ENCODE measurements at regions of chr2 and their contacts with region 1.

Region 1: DNA sequence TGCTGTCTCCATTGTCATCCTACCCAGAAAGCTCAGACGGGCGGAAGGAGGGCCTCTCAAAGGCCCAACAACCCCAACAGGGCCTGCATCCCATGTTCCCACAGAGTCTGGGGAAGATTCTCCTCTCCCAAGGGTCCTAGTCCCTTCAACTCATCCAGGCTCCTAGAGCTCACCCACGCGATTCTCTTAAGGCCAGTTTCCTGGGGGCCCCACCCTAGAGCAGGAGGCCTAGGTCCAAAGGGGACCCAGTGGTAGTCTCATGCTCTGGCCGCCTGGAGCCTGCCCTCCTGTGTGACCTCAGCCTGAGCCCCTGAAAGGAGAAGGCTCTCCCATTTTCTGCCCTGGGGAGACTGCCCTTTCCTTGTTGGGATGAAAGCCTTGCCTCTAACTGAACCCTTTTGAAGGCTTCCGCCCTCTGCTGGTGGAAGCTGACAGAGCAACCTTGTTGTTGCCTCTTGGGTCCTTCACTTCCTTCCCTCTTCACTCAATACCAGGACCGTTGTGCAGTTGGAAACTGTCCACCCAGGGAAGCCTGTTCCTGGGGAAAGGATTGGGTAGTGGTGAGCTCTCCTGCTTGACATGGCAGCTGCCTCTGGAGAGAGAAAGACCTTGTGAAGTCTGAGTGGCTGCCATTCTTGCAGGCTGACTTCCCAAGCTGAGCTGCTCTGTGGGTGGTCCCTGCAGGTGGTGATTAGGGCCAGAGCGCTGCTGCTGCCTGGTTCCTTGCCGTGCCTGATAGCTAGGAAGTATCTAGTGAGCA is 86.0 kb upstream of the ALPP start:
- DNase-seq: peak; percentile 23
- ATAC-seq: peak; percentile 50
- H3K4me3 Mint-ChIP-seq: no peak overlapping the region
- H3K27ac Mint-ChIP-seq: no peak overlapping the region
- H3K4me1 Mint-ChIP-seq: peaks cover 2% of the 10 kb centered on the region
- H3K27me3 Mint-ChIP-seq: no peaks in the 10 kb centered on the region
- CTCF ChIP-seq: no peak

Region 2: DNA sequence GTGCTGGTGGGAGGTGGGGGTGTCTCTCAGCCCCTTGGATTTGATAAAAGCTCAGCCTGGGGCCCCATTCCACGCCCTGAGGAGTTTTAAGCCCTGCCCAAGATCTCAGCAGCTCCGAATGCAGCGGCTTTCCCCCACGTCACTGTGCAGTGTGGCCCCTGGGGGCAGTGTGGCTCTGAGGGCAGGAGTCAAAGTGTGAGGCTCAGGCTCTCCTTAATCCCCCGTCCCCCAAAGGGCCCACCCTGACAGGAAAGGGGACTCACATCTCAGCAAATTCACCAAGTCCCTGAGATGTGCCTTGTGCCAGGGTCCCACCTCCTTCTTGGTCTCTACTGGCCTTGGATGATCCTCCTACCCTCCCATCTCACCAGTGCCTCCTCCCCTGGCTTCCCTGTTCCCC is 391.6 kb before region 1 on chr2:
- CTCF ChIA-PET with region 1: interaction called, 4 read pairs
- POLR2A ChIA-PET with region 1: no interaction called
- intact Hi-C with region 1: loop called (anchors 1 kb)
- DNase-seq: no peak
- ATAC-seq: no peak
- H3K4me3 Mint-ChIP-seq: no peak overlapping the region
- H3K27ac Mint-ChIP-seq: no peak overlapping the region
- H3K4me1 Mint-ChIP-seq: no peaks in the 10 kb centered on the region
- H3K27me3 Mint-ChIP-seq: no peaks in the 10 kb centered on the region
- CTCF ChIP-seq: no peak

Region 3: GRCh38 chr2:232308986-232309385 is 16.4 kb after region 1 on chr2:
- CTCF ChIA-PET with region 1: no interaction called
- POLR2A ChIA-PET with region 1: no interaction called
- intact Hi-C with region 1: no loop called
- DNase-seq: no peak
- ATAC-seq: no peak
- H3K4me3 Mint-ChIP-seq: no peak overlapping the region
- H3K27ac Mint-ChIP-seq: no peak overlapping the region
- H3K4me1 Mint-ChIP-seq: peaks cover 4% of the 10 kb centered on the region
- H3K27me3 Mint-ChIP-seq: no peaks in the 10 kb centered on the region
- CTCF ChIP-seq: no peak